G401 (cell line): ENCODE measurements at regions of chr11 and their contacts with region 1.

Region 1: GRCh38 chr11:1628506-1629325 is 859 bp upstream of the KRTAP5-5 start:
- DNase-seq: peak; percentile 60

Region 2: GRCh38 chr11:1532014-1532586 is 96.6 kb before region 1 on chr11:
- in situ Hi-C with region 1: loop called (anchors 10 kb)
- DNase-seq: peak; percentile 94